Naive thymus-derived CD8-positive, alpha-beta T cell (primary cell): ENCODE measurements at regions of chr19 and their contacts with region 1.

Region 1: GRCh38 chr19:35716801-35717666 is 769 bp upstream of the KMT2B start:
- DNase-seq: peak; percentile 73 to 99 (median 96)
- ATAC-seq: peak; percentile 83 to 85
- H3K4me3 Mint-ChIP-seq: peak overlapping the region; percentile 89 to 99 (median 94)
- H3K27ac Mint-ChIP-seq: peak overlapping the region; percentile 89 to 97 (median 94)
- H3K4me1 Mint-ChIP-seq: peaks cover 41 to 74% (median 64%) of the 10 kb centered on the region in 4 donors
- H3K27me3 Mint-ChIP-seq: no peaks in the 10 kb centered on the region

Region 2: DNA sequence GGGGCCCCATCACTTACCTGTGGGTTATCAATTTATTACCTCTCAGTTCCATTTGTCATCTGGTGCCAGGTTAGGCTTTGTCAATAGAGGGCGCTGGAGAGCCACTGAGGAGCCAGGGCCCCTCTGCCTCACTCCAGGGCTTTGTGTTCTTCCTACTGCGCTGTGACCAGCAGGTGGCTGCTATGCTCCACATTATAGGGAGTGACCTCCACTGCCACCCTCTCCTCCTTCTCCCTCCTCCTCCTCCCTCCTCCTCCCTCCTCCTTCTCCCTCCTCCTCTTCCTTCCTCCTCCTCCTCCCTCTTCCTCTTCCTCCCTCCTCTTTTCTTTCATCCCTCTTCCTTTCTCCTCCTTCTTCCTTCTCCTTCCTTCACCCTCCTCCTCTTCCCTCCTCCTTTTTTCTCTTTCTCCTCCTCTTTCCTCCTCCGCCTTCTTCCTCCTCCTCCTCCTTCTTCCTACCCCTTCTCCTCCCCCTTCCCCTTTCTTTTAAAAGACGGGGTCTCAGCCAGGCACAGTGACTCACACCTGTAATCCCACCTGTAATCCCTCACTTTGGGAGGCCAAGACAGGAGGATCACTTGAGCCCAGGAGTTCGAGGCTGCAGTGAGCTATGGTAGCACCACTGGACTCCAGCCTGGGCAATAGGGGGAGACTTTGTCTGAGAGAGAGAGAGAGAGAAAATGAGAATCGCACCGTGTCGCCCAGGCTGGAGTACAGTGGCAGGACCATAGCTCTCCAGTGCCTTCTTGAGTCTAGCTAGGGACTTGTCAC is 23.0 kb before region 1 on chr19:
- POLR2A ChIA-PET with region 1: interaction called, 13 read pairs
- DNase-seq: peak; percentile 78 to 94 (median 88)
- ATAC-seq: peak; percentile 100
- H3K4me3 Mint-ChIP-seq: no peak overlapping the region
- H3K27ac Mint-ChIP-seq: peak overlapping the region in 2 of 10 donors; percentile 28 to 48
- H3K4me1 Mint-ChIP-seq: no peaks in the 10 kb centered on the region
- H3K27me3 Mint-ChIP-seq: peaks cover 0 to 3% (median 0%) of the 10 kb centered on the region in 5 donors

Region 3: DNA sequence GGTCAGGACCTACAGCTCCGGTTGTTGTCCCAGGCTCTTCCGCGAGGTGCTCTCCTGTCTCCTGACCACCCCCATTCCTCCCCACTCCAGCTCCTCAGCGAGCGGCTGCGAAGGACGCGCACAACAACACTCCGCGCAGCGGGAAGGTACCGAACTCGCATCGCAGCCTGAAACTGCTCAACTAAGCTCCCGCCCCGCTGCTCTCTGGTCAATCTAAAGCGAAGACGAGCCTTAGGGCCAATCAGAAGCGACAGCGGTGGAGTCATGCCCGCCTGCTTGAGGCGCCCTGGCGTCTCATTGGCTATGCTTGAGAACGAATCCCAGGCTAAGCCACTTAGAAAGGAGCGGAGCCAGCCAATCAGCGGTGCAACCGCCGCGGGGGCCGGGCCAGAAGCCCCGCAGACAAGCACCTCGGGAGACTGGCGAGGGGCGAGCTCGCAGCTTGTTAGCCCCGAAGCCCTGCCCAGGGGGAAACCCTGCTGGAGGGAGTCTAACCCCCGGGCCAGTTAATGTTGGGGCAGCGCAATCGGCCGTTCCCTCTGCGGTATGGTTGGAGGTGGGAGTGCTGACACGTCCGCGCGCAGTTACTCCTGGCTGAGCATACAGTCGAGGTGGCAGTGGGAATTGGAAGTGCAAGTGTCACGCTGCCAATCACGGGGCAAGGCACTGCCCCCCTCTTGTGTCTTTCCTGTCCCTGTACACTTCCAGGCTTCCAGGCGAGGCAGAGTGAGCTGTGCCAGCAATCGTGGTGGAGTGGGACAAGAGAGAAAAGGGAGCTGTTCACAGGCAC is 14.6 kb before region 1 on chr19:
- POLR2A ChIA-PET with region 1: interaction called, 24 read pairs
- DNase-seq: peak; percentile 84 to 96 (median 91)
- ATAC-seq: peak; percentile 99 to 100
- H3K4me3 Mint-ChIP-seq: peak overlapping the region; percentile 91 to 99 (median 98)
- H3K27ac Mint-ChIP-seq: peak overlapping the region; percentile 85 to 98 (median 94)
- H3K4me1 Mint-ChIP-seq: peaks cover 5 to 9% (median 8%) of the 10 kb centered on the region in 4 donors
- H3K27me3 Mint-ChIP-seq: peaks cover 0 to 9% (median 2%) of the 10 kb centered on the region in 5 donors

Region 4: DNA sequence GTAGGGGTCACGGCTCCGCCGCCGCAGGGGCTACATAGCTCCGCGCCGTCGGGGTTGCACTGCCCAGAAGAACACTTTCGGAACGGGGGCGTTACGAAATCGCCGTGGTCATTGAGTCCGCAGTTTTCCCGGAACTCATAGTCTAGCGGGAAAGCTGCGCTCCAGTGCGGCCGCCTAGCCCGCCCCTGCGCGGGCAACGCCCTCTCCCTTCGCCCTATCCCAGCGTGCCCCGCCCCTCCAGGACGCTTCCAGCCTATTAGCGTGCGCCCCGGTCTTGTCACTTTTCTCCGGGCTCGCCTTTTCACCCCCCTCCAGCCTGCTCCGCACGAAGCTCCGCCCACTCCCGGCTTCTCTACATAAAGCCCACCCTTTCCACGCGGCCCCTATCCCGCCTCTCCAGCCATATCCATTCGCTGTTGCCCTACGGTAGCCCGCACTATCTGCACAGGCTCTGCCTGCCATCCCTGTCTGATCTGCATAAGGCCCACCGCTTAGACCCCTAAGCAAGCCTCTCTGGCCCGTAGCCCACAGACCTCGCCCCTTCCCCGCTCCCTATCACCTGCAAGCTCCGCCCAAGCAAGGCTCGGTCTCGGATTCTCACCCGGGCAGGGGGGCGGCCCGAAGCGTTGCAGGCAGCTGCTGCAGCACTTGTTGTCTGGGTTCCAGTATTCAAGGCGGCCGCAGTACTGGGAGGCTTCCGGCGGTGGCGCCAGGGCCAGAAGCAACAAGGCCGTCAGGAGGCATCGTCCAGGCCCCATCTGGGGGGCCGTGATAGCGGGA is 23.6 kb after region 1 on chr19:
- POLR2A ChIA-PET with region 1: interaction called, 29 read pairs
- DNase-seq: peak; percentile 88 to 97 (median 94)
- ATAC-seq: peak; percentile 65 to 68
- H3K4me3 Mint-ChIP-seq: peak overlapping the region; percentile 91 to 99 (median 96)
- H3K27ac Mint-ChIP-seq: peak overlapping the region; percentile 88 to 99 (median 94)
- H3K4me1 Mint-ChIP-seq: peaks cover 29 to 66% (median 59%) of the 10 kb centered on the region in 4 donors
- H3K27me3 Mint-ChIP-seq: no peaks in the 10 kb centered on the region

Region 5: DNA sequence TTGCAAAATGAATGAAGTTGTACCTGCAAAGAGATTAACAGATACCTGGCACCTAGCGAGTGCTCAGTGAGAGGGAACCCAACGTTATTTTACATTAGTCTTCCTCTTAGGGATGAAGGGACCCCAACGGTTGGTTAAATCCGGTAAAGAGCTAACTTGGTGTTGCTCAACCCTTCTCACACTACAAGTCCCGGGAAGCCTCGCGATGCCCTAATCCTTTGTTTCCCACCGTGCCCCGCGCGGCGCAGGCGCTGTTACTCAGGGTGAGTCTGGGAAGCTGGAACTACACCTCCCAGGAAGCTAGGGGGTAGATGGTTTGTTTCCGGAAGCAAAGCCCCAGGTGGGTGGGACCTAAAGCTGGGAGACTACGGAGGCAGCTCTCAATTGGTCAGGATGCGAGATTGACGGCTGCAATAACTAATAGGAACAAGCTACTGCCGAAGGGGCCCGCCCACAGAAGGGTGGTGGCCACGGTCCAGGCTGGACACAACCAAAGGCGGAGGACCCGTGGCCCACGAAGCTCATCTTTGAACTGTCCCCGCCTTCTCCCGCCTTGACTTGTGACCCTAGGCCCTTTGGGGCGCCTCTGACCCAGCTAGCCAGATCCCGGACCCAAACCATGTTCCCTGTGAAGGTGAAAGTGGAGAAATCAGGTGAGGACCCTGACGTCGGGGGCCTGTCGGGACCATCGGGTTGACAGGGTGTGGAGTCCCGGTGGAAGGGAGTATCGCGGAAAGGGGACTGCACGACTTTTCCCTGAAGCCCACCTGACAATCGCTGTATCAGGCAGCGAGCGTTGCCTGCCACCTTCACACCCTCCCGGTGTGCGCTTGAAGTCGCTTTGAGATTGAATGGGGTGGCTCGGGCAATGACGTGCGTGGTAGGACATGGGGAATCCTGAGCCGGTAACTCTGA is 31.3 kb after region 1 on chr19 and contains the start of gene LIN37:
- POLR2A ChIA-PET with region 1: interaction called, 29 read pairs
- DNase-seq: peak; percentile 92 to 99 (median 98)
- ATAC-seq: peak; percentile 74 to 75
- H3K4me3 Mint-ChIP-seq: peak within 1 kb of the TSS; percentile 96 to 99 (median 98)
- H3K27ac Mint-ChIP-seq: peak within 1 kb of the TSS; percentile 89 to 98 (median 96)
- H3K4me1 Mint-ChIP-seq: peaks cover 23 to 55% (median 49%) of the 10 kb centered on the region in 4 donors
- H3K27me3 Mint-ChIP-seq: no peaks in the 10 kb centered on the region
- polyA plus RNA-seq, gene LIN37: 5.4 to 15.5 (median 8.1) TPM

Region 6: DNA sequence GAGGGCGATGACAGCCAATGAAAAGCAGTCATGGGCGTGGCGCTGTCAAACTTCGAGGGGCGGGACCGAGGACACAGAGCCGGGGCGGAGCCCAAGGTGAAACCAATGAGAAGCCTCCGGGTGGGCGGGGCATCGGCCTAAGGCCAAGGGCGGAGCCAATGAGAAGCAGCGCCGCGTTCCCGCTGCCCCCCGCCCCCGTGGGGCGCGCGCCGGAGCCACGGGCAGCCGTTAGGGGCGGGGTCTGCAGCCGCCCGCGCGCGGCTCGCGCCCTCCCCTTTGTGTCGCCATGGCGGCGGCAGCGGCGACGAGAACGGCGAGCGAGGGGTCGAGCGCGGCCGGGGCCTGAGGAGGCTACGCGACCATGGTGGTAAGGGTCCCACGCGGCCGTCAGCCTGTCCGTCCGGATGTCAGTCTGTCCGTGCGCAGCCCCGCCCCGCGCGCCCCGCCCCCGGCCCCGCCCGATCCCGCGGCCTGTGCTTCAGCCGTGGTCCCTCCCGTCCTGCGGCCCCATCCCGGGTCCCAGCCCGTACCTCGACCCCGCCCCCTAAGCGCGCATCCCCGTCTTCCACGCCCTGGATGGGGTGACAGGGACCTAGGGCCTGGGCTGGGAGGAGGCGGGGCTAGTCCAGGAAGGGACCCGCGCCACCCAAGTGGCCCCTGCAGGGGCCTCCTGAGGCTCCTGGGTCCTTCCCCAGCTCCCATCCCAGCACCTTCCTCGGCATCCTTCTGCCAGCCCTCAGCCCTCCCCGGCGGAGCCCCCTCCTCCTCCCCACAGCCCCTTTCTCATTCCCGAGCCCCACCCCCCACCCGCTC is 58.5 kb after region 1 on chr19 and contains the start of gene ARHGAP33:
- POLR2A ChIA-PET with region 1: no interaction called
- DNase-seq: peak; percentile 93 to 99 (median 98)
- ATAC-seq: peak; percentile 94 to 98
- H3K4me3 Mint-ChIP-seq: peak within 1 kb of the TSS; percentile 74 to 90 (median 87)
- H3K27ac Mint-ChIP-seq: peak within 1 kb of the TSS in 8 of 10 donors; percentile 10 to 80 (median 70)
- H3K4me1 Mint-ChIP-seq: peaks cover 8 to 23% (median 18%) of the 10 kb centered on the region in 4 donors
- H3K27me3 Mint-ChIP-seq: no peaks in the 10 kb centered on the region
- polyA plus RNA-seq, gene ARHGAP33: 0.13 TPM in 1 of 3 donors, not detected in the others

Region 7: GRCh38 chr19:35790981-35791813 is 74.2 kb after region 1 on chr19:
- POLR2A ChIA-PET with region 1: no interaction called
- DNase-seq: peak in 1 of 10 donors; percentile 5
- ATAC-seq: peak in 1 of 2 donors; percentile 39
- H3K4me3 Mint-ChIP-seq: no peak overlapping the region
- H3K27ac Mint-ChIP-seq: no peak overlapping the region
- H3K4me1 Mint-ChIP-seq: peaks cover 0 to 2% (median 0%) of the 10 kb centered on the region in 4 donors
- H3K27me3 Mint-ChIP-seq: peaks cover 10 to 26% (median 18%) of the 10 kb centered on the region in 5 donors

Region 8: GRCh38 chr19:35882114-35882832 is 165.2 kb after region 1 on chr19:
- POLR2A ChIA-PET with region 1: no interaction called
- DNase-seq: peak in 8 of 10 donors; percentile 22 to 77 (median 52)
- ATAC-seq: peak; percentile 51 to 61
- H3K4me3 Mint-ChIP-seq: no peak overlapping the region
- H3K27ac Mint-ChIP-seq: peak overlapping the region in 1 of 10 donors; percentile 67
- H3K4me1 Mint-ChIP-seq: peaks cover 6 to 17% (median 13%) of the 10 kb centered on the region in 4 donors
- H3K27me3 Mint-ChIP-seq: peaks cover 5 to 30% (median 18%) of the 10 kb centered on the region in 5 donors